Panc1 (cell line): ENCODE measurements at regions of chr19 and their contacts with region 1.

Region 1: GRCh38 chr19:43725468-43725867 is 9.6 kb downstream of the IRGC start:
- DNase-seq: no peak
- ATAC-seq: no peak
- H3K4me3 ChIP-seq: no peak overlapping the region
- H3K27ac ChIP-seq: no peak overlapping the region
- H3K4me1 ChIP-seq: no peaks in the 10 kb centered on the region
- H3K27me3 ChIP-seq: no peaks in the 10 kb centered on the region
- CTCF ChIP-seq: no peak

Region 2: GRCh38 chr19:43606569-43607229 is 118.8 kb before region 1 on chr19:
- CTCF ChIA-PET with region 1: no interaction called
- POLR2A ChIA-PET with region 1: no interaction called
- in situ Hi-C with region 1: no loop called
- intact Hi-C with region 1: no loop called
- DNase-seq: no peak
- ATAC-seq: no peak
- H3K4me3 ChIP-seq: no peak overlapping the region
- H3K27ac ChIP-seq: no peak overlapping the region
- H3K4me1 ChIP-seq: no peaks in the 10 kb centered on the region
- H3K27me3 ChIP-seq: no peaks in the 10 kb centered on the region
- CTCF ChIP-seq: no peak

Region 3: DNA sequence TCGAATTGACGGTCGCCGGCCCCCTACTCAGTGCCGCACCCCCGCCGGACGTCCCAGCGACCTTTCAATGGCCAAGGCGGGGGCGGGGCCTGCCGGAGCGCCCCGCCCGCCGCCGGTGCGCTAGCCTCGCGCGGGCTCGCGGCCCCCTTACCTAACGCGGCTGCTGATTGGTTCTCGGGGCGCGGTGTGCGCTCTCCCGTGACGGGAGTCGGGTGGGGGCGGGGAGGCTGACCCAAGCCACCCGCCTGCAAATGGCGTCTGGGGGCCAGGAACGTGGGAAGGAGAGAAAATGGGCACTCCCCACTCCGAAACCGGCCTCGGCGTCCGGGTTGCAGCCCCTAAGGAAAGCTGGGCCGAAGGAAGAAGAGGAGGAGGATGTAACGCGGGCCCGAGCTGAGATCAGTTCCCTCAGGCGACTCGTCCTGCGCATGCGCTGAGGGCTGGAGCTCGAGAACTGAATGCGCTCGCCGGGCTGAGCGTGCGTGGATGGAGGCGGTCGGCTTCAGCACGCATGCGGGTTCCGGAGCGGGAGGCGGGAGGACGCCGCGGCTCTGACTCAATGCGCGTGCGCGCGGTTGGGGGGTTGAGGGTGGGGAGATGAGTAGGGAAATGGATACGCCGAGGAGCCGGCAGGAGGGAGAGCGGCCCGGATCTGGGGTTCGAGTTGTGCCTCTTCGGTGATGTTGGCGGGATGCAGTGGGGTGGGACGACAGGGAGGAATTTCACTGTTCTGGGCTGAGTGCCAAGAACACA is 29.2 kb after region 1 on chr19 and contains the start of gene SMG9:
- CTCF ChIA-PET with region 1: no interaction called
- POLR2A ChIA-PET with region 1: interaction called, 10 read pairs
- in situ Hi-C with region 1: no loop called
- intact Hi-C with region 1: no loop called
- DNase-seq: peak; percentile 76
- ATAC-seq: peak; percentile 91
- H3K4me3 ChIP-seq: peak within 1 kb of the TSS; percentile 85 to 86
- H3K27ac ChIP-seq: peak within 1 kb of the TSS; percentile 88
- H3K4me1 ChIP-seq: peaks cover 26% of the 10 kb centered on the region
- H3K27me3 ChIP-seq: no peaks in the 10 kb centered on the region
- CTCF ChIP-seq: no peak
- total RNA-seq, gene SMG9: 49.9 TPM

Region 4: DNA sequence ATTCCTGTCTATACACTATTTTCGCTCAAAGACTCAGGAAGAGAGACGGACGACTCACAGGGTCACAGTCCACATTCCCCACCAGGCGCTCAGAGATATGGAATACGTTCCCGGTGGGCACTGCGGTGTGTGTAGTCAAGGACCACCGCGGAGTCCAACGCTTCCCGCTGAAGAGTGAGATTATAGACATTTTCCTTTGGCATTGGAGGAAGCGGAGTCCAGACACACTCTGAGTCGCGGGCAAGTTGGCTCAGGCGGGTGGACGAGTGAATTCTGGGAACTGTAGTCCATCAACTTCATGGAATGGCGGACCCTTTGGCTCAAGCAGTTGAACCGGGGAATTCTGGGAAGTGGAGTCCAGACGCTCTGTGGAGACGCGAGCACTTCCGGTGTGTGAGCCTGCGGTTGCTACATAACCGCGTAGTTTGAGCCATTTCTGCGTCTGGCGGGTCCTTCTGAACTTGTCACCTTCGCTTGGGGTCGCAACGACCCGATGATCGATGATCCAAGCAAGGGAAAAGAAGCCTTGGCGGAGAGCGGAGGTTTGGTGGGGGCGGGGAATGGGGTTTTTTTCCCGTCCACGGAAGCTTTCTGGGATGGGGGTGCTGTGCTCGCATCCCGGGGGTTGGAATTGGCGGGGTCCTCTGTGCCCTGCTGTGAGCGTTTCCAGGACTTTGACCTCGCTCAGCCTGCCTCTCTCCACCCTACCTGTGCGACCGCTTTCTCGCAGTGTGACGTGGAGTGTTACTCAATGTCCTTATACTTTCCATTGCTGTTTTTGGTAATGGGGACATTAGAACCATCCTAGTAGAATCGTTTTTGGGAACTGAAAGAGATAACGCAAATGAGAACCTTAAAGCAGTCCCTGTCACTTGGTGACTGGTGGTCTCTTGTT is 277.3 kb after region 1 on chr19 and contains the start of gene ZNF230:
- CTCF ChIA-PET with region 1: no interaction called
- POLR2A ChIA-PET with region 1: no interaction called
- in situ Hi-C with region 1: no loop called
- intact Hi-C with region 1: no loop called
- DNase-seq: peak; percentile 80
- ATAC-seq: peak; percentile 99
- H3K4me3 ChIP-seq: peak within 1 kb of the TSS; percentile 73 to 92
- H3K27ac ChIP-seq: peak within 1 kb of the TSS; percentile 93
- H3K4me1 ChIP-seq: no peaks in the 10 kb centered on the region; the same call in none of the 2 replicates
- H3K27me3 ChIP-seq: no peaks in the 10 kb centered on the region
- CTCF ChIP-seq: no peak
- total RNA-seq, gene ZNF230: 4.2 TPM